CD8-positive, alpha-beta T cell (primary cell): ENCODE measurements at regions of chr9 and their contacts with region 1.

Region 1: GRCh38 chr9:69549310-69550202 is 122.6 kb downstream of the APBA1 start:
- DNase-seq: peak in 4 of 9 experiments; percentile 7 to 49 (median 46)
- ATAC-seq: peak; percentile 48
- H3K4me3 ChIP-seq: no peak overlapping the region
- H3K4me3 Mint-ChIP-seq: no peak overlapping the region
- H3K27ac ChIP-seq: no peak overlapping the region
- H3K27ac Mint-ChIP-seq: no peak overlapping the region
- H3K4me1 ChIP-seq: no peaks in the 10 kb centered on the region
- H3K4me1 Mint-ChIP-seq: peaks cover 4% of the 10 kb centered on the region
- H3K27me3 ChIP-seq: no peaks in the 10 kb centered on the region
- H3K27me3 Mint-ChIP-seq: peaks cover 22% of the 10 kb centered on the region
- CTCF ChIP-seq: peak; percentile 74

Region 2: DNA sequence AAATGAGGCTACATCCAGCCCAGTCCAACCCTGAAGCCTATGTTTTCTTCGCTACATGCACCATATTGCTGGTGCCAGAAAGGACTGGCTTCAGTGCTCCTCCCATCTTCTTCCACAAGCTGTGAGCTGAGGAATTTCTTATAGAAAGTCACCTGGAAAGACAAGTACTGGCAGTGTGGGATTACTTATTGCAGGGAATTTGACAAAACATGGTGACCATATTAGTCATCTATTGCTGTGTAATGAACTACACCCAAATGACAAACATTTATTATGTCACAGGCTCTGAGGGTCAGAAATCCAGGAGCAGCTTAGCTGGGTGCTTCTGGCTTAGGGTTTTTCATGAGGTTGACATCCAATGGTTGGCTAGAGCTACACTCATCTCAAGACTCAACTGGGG is 149.1 kb before region 1 on chr9:
- CTCF ChIA-PET with region 1: no interaction called
- POLR2A ChIA-PET with region 1: no interaction called
- intact Hi-C with region 1: no loop called
- DNase-seq: no peak
- ATAC-seq: no peak
- H3K4me3 ChIP-seq: no peak overlapping the region
- H3K4me3 Mint-ChIP-seq: no peak overlapping the region
- H3K27ac ChIP-seq: no peak overlapping the region
- H3K27ac Mint-ChIP-seq: no peak overlapping the region
- H3K4me1 ChIP-seq: no peaks in the 10 kb centered on the region
- H3K4me1 Mint-ChIP-seq: no peaks in the 10 kb centered on the region
- H3K27me3 ChIP-seq: no peaks in the 10 kb centered on the region
- H3K27me3 Mint-ChIP-seq: peaks cover 16% of the 10 kb centered on the region
- CTCF ChIP-seq: no peak

Region 3: GRCh38 chr9:69421908-69422801 is 127.4 kb before region 1 on chr9:
- CTCF ChIA-PET with region 1: interaction called, 7 read pairs
- POLR2A ChIA-PET with region 1: no interaction called
- intact Hi-C with region 1: loop called in 1 of 2 experiments (anchors 2 kb)
- DNase-seq: peak in 8 of 9 experiments; percentile 6 to 62 (median 40)
- ATAC-seq: no peak
- H3K4me3 ChIP-seq: no peak overlapping the region
- H3K4me3 Mint-ChIP-seq: no peak overlapping the region
- H3K27ac ChIP-seq: no peak overlapping the region
- H3K27ac Mint-ChIP-seq: no peak overlapping the region
- H3K4me1 ChIP-seq: no peaks in the 10 kb centered on the region
- H3K4me1 Mint-ChIP-seq: no peaks in the 10 kb centered on the region
- H3K27me3 ChIP-seq: no peaks in the 10 kb centered on the region
- H3K27me3 Mint-ChIP-seq: peaks cover 18% of the 10 kb centered on the region
- CTCF ChIP-seq: peak; percentile 63

Region 4: DNA sequence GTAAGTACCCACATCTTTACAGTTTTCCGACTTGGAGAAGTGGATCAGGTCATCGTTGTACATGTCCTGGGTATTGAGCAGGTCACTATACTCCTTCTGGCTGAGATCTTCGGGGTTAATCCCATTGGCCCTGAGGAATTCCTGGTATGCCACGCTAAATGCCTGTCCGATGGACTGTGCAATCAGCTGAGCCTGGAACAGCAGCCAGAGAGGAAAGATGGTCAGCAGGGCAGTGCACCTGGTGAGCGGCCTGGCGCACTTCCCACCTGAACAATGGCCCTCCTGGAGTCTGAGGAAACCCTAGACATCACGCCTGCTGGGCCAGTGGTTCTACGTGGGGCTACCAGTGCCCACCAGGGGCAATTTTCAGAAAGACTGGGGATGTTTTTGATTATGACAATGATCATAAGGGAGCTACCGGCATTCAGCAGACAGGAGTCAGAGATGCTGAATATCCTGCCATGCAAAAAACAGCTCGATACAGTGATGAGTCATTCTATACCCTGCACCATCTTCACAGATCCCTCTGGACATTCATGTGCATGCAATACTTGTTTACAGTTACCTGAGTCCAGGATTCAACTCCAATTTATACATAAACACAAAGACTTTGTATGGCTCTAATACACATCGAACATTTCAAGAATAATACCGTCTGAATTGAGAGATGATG is 97.3 kb before region 1 on chr9:
- CTCF ChIA-PET with region 1: no interaction called
- POLR2A ChIA-PET with region 1: no interaction called
- intact Hi-C with region 1: no loop called
- DNase-seq: no peak
- ATAC-seq: no peak
- H3K4me3 ChIP-seq: no peak overlapping the region
- H3K4me3 Mint-ChIP-seq: no peak overlapping the region
- H3K27ac ChIP-seq: no peak overlapping the region
- H3K27ac Mint-ChIP-seq: no peak overlapping the region
- H3K4me1 ChIP-seq: peaks cover 4% of the 10 kb centered on the region
- H3K4me1 Mint-ChIP-seq: no peaks in the 10 kb centered on the region
- H3K27me3 ChIP-seq: no peaks in the 10 kb centered on the region
- H3K27me3 Mint-ChIP-seq: peaks cover 3% of the 10 kb centered on the region
- CTCF ChIP-seq: no peak